ACHN (cell line): ENCODE measurements at regions of chr17 and their contacts with region 1.

Region 1: GRCh38 chr17:65202844-65203571 is 65.8 kb downstream of the RGS9 start:
- DNase-seq: no peak

Region 2: DNA sequence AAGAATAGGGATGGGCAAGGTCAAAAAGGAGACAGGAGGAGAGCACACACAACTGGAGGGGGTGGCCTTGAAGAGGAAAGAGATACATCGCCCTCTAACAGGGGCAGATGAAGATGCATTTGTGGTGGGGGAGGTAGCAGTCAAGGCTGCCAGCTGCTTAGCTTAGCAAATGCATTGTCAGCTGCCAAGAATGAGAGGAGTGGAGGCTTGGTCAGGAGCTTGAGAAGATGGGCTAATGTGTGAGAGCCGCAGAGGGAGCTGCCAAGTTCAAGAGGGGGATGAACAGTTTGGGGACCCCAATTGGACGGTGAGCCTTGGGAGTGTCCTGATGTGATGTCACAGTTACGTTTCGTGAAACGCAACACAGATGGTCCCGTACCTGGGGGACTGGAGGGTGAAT is 117.6 kb before region 1 on chr17:
- in situ Hi-C with region 1: no loop called
- DNase-seq: no peak

Region 3: DNA sequence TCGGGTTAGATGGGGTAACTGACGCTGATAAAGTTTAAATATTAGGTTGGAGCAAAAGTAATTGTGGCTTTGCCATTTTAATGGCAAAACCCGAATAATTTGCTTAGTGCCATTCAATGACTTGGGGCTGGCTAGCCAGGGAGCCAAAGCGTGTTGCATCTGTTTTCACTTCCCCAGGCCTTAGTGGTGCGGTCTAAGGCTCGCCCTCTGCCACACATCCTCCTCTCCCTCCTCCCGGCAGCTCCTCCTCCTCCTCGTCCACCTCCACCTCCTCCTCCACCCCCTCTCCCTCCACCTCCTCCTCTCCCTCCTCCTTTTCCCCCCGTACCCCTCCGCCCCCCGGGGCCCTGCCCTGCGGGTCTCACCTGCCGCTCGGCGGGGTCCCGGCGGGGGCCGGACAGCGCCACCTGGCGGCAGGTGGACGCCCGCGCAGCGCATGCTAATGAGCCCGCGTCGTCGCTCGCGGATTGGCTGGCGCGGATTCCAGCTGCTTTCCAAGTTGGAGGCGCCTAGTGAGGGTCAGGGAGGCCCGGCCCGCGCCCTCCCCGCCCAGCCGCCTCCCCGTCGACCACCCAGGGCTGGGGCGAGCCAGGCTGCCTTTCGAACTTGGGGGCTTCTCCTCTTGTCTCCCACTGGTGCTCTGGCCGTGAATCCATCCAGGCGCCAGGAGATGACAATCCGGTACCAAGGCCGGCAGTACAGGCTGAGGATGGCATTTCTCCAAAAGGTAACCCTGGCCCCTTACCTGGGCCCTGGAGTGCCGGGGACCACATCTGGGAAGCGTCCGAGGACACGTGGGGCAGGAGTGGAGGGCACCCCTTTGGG is 102.5 kb before region 1 on chr17:
- in situ Hi-C with region 1: loop called (anchors 10 kb)
- DNase-seq: peak; percentile 86

Region 4: GRCh38 chr17:65677932-65678331 is 474.9 kb after region 1 on chr17:
- in situ Hi-C with region 1: no loop called
- DNase-seq: no peak